ENCODE measurements at regions of chr3 and their contacts with region 1.

Region 1: GRCh38 chr3:161559177-161559998 is 62.8 kb downstream of the OTOL1 start:
- DNase-seq: peak; percentile 75
- ATAC-seq: peak; percentile 49
- H3K4me3 ChIP-seq: peak overlapping the region; percentile 58
- H3K27ac ChIP-seq: no peak overlapping the region
- H3K4me1 ChIP-seq: peaks cover 34% of the 10 kb centered on the region
- H3K27me3 ChIP-seq: no peaks in the 10 kb centered on the region
- CTCF ChIP-seq: peak; percentile 96

Region 2: DNA sequence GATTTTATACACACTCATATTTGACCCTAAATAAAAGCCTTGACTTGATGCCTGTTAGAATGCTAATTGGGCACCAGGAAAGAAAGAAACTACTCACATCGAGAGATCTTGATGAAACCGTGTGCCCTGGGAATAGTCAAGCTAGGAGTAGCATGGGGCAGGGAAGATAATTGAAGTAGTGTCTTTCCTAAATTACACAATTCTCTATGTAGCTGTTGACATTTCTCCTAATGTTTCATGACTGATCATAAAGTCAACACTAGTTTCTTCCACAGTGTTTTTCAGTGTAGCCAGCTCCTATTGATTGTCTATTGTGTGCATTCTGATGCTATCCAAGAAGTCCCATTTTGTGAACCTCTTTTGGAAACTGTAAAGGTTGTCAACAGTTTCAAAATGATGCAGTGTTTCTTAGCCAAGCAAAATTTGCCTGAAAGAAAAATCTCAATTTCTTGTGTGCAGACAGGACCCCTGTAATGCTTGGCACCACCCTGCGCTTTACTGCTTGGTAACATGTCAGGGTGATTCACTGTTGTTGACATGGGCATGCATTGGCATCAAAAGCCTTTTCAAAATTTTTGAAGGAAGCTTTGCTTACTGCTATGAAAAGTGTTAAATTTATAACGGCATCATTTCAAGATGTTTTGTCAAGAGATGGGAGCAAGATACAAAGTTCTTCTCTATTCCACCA is 115.2 kb before region 1 on chr3:
- CTCF ChIA-PET with region 1: no interaction called
- POLR2A ChIA-PET with region 1: no interaction called
- intact Hi-C with region 1: loop called (anchors 5 kb)
- DNase-seq: peak; percentile 77
- ATAC-seq: peak; percentile 94
- H3K4me3 ChIP-seq: no peak overlapping the region; the same call in 1 of the 2 replicates
- H3K27ac ChIP-seq: peak overlapping the region; percentile 66
- H3K4me1 ChIP-seq: peaks cover 22% of the 10 kb centered on the region
- H3K27me3 ChIP-seq: no peaks in the 10 kb centered on the region
- CTCF ChIP-seq: no peak

Region 3: GRCh38 chr3:161700998-161701397 is 141.6 kb after region 1 on chr3:
- CTCF ChIA-PET with region 1: no interaction called
- POLR2A ChIA-PET with region 1: no interaction called
- intact Hi-C with region 1: loop called (anchors 1 kb)
- DNase-seq: peak; percentile 30
- ATAC-seq: no peak
- H3K4me3 ChIP-seq: no peak overlapping the region
- H3K27ac ChIP-seq: no peak overlapping the region
- H3K4me1 ChIP-seq: no peaks in the 10 kb centered on the region
- H3K27me3 ChIP-seq: no peaks in the 10 kb centered on the region
- CTCF ChIP-seq: no peak

Region 4: GRCh38 chr3:161914737-161915417 is 355.5 kb after region 1 on chr3:
- CTCF ChIA-PET with region 1: no interaction called
- POLR2A ChIA-PET with region 1: no interaction called
- intact Hi-C with region 1: loop called (anchors 1 kb)
- DNase-seq: peak; percentile 77
- ATAC-seq: peak; percentile 82
- H3K4me3 ChIP-seq: peak overlapping the region; percentile 27; the same call in 1 of the 2 replicates
- H3K27ac ChIP-seq: peak overlapping the region; percentile 74
- H3K4me1 ChIP-seq: peaks cover 30% of the 10 kb centered on the region
- H3K27me3 ChIP-seq: no peaks in the 10 kb centered on the region
- CTCF ChIP-seq: peak; percentile 79

Region 5: DNA sequence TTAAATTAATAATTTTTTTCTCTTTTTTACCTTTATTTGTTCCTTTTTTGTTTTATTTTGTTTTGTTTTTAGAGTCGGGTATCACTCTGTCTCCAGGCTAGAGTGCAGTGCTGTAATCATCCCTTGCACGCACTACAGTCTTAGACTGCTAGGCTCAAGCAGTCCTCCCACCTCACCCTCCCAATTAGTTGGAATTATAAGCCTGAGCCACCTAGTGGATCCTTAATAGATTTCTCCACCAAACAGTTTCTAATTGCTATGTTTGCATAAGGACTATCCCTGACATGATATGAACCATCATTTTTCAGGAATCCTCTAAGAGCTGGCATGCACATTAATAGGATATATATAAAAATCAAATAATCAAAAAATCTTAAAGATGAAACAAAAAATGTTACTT is 930.5 kb after region 1 on chr3:
- CTCF ChIA-PET with region 1: no interaction called
- POLR2A ChIA-PET with region 1: no interaction called
- intact Hi-C with region 1: loop called (anchors 10 kb)
- DNase-seq: peak; percentile 53
- ATAC-seq: peak; percentile 60
- H3K4me3 ChIP-seq: no peak overlapping the region
- H3K27ac ChIP-seq: no peak overlapping the region
- H3K4me1 ChIP-seq: peaks cover 21% of the 10 kb centered on the region
- H3K27me3 ChIP-seq: no peaks in the 10 kb centered on the region
- CTCF ChIP-seq: peak; percentile 57

Region 6: DNA sequence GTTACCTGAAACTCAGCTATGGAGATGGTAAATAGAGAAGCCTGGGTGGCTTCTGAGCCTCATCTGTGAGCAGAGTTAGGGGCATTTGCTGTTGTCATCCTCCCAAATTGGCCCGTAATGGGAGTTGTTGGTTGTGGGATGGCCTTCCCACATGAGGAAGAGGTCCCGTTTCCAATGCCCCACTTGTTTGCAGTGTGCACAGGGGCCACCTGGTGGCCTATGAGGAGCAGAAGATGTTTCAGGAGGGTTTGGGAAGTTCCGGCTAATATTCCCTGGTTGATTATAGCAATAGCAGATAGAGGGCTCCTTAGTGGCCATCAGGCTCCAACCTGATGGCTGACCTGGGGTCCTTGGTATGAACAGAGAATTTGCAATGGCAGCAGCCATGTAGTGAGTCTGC is 1483.7 kb after region 1 on chr3:
- CTCF ChIA-PET with region 1: no interaction called
- POLR2A ChIA-PET with region 1: no interaction called
- intact Hi-C with region 1: loop called (anchors 5 kb)
- DNase-seq: peak; percentile 62
- ATAC-seq: peak; percentile 76
- H3K4me3 ChIP-seq: no peak overlapping the region
- H3K27ac ChIP-seq: no peak overlapping the region
- H3K4me1 ChIP-seq: no peaks in the 10 kb centered on the region
- H3K27me3 ChIP-seq: no peaks in the 10 kb centered on the region
- CTCF ChIP-seq: peak; percentile 81

Region 7: GRCh38 chr3:163490119-163490518 is 1930.7 kb after region 1 on chr3:
- CTCF ChIA-PET with region 1: no interaction called
- POLR2A ChIA-PET with region 1: no interaction called
- intact Hi-C with region 1: loop called (anchors 5 kb)
- DNase-seq: peak; percentile 79
- ATAC-seq: peak; percentile 95
- H3K4me3 ChIP-seq: no peak overlapping the region
- H3K27ac ChIP-seq: no peak overlapping the region
- H3K4me1 ChIP-seq: no peaks in the 10 kb centered on the region
- H3K27me3 ChIP-seq: no peaks in the 10 kb centered on the region
- CTCF ChIP-seq: peak; percentile 91